ENCODE measurements at regions of chr2 and their contacts with region 1.

Region 1: GRCh38 chr2:219530048-219530963 is 13.3 kb downstream of the CHPF start:
- DNase-seq: peak; percentile 74 to 76
- ATAC-seq: peak; percentile 91 to 96
- H3K4me3 ChIP-seq: peak overlapping the region in 1 of 4 donors; percentile 40
- H3K27ac ChIP-seq: no peak overlapping the region
- H3K4me1 ChIP-seq: no peaks in the 10 kb centered on the region
- H3K27me3 ChIP-seq: peaks cover 0 to 2% (median 0%) of the 10 kb centered on the region in 3 donors
- CTCF ChIP-seq: peak; percentile 97 to 99 (median 98)
- POLR2A ChIP-seq: no peak

Region 2: DNA sequence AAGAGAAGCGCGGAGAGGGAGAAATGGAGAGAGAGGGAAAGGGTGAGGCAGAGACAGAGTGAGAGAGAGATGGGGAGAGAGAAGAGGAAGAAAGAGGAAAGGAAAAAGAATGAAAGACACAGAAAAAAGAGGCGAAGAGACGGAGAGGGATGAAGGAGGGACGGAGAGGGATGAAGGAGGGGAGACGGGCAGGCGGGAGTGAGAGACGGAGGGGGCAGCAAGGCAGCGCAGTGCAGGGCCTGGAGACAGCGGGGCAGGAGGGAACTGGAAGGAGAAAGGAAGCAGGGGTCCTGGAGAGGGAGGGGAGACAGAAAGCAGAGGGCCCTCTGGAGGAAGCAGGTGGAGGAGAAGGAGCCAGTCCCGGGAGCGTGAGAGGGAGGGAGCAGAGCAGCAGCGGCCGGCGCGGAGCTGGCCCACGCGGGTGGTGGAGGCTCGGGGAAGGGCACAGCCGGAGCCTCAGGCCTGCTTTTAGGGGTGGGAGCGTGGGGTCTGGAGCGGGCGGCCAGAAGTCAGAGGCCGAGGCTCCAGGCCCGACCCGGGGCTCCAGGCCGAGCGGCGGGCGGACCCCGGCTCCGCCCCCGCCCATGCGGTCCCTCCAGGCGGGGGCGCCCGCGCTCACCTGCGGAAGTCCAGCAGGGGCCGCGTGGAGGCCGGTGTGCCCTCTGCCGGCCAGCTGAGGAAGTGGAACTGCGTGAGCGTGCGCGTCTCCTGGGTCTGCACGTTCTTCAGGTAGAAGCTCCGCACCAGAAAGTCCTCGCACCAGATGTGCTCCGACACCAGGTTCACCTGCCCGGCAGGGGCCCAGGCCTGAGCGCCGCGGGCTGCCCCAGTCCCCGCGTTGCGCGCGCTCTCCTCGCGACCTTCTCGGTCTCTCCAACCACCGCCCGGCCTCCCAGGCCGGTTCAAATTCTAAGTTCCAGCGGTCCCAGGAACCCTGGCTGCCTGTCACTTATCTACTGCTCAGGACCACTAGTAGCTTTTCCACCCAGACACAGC is 235.7 kb before region 1 on chr2:
- in situ Hi-C with region 1: loop called in 1 of 4 experiments (anchors 25 kb)
- intact Hi-C with region 1: loop called (anchors 10 kb)
- DNase-seq: peak; percentile 64 to 80
- ATAC-seq: peak; percentile 85 to 86
- H3K4me3 ChIP-seq: peak overlapping the region; percentile 57 to 63 (median 58)
- H3K27ac ChIP-seq: peak overlapping the region; percentile 68 to 82 (median 77)
- H3K4me1 ChIP-seq: peaks cover 8 to 10% of the 10 kb centered on the region in 2 donors
- H3K27me3 ChIP-seq: no peaks in the 10 kb centered on the region
- CTCF ChIP-seq: peak; percentile 95 to 99 (median 98)
- POLR2A ChIP-seq: peak in 1 of 2 donors; percentile 30

Region 3: DNA sequence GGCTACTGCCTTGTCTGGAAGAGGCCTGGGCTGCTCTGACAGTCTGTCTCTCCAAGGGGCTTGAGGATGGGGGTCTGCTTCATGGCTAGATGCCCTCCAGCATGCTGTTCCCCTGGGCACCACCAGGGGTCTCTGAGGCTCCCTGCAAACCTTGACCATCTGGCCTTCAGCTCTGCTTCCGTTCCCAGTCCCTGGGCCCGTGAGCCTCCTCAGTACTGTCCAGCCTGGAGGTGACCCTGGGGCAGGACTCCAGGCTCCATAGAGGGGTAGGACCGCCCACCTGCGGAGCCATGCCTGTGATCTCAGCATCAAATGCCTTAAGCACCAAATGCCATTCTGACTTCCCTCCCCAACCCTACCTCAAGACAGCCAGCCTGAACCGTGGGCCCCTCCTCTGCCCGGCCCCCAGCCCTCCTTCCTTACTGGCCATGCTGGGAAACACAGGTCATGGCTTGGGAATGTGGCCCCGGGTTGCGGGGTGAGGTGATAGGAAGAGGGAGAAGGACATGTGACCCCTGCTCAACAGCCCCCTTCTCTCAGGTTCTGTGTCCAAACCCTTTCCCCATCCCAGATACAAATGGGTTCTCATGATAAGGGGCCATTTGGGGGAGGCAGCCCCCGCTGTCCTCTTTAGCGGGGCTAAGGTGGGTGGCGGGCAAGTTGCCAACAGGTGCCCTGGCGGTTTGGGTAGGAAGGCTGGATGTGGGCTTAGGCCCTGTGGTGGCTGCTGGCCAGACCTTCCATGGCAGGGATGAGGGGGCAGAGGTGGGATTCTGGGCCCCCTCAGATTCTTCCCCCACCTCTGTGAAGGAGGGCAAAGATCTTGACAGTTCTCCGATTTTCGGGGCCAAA is 70.6 kb before region 1 on chr2:
- in situ Hi-C with region 1: no loop called
- intact Hi-C with region 1: loop called (anchors 5 kb)
- DNase-seq: peak; percentile 59 to 89
- ATAC-seq: peak; percentile 67 to 71
- H3K4me3 ChIP-seq: peak overlapping the region in 2 of 4 donors; percentile 32 to 43
- H3K27ac ChIP-seq: peak overlapping the region; percentile 95 to 99 (median 97)
- H3K4me1 ChIP-seq: peaks cover 47 to 49% of the 10 kb centered on the region in 2 donors
- H3K27me3 ChIP-seq: no peaks in the 10 kb centered on the region
- CTCF ChIP-seq: peak; percentile 87 to 96 (median 90)
- POLR2A ChIP-seq: no peak

Region 4: GRCh38 chr2:219490186-219490585 is 40.1 kb before region 1 on chr2:
- in situ Hi-C with region 1: loop called in 1 of 4 experiments (anchors 5 kb)
- intact Hi-C with region 1: loop called (anchors 1 kb)
- DNase-seq: no peak
- ATAC-seq: no peak
- H3K4me3 ChIP-seq: no peak overlapping the region
- H3K27ac ChIP-seq: peak overlapping the region in 3 of 4 donors; percentile 33 to 78 (median 60)
- H3K4me1 ChIP-seq: peaks cover 4 to 12% of the 10 kb centered on the region in 2 donors
- H3K27me3 ChIP-seq: no peaks in the 10 kb centered on the region
- CTCF ChIP-seq: peak in 1 of 5 experiments; percentile 36
- POLR2A ChIP-seq: no peak

Region 5: DNA sequence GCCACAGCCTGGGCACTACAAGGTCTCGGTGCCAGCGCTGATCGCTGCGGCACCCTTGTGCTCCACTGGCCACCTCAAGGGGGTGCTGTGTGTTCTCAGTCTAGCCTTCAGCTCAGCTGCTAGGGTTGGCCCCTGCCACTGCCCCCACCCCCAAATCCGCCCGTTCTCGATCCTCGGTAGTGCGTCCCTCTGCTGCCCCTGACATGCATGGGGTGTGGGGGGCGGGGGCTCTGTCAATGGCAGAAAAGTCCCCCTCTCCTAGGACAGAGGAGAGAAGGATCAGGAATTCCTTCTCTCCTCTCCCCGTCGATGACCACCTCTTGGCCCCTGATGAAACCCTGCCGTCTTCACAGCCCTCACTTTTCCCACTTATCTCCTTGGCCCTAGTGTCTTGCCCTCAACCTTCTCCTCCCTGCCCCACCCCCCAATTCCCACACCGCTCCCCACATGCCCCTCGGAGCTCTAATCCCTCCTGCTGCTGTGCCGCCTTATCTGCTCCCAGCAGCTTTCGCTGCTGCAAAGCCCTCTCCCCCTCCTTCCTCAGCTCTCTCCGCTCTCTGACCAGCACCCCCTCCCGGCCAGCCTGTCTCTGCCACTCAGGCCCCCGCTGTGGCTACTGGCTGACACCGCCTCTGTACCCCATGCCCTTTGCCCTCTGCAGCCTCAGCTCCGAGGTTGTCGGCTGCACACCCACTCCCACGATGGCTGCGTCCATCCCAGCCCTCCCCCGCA is 20.4 kb before region 1 on chr2:
- in situ Hi-C with region 1: no loop called
- intact Hi-C with region 1: loop called (anchors 1 kb)
- DNase-seq: no peak
- ATAC-seq: peak; percentile 51 to 77
- H3K4me3 ChIP-seq: peak overlapping the region; percentile 4 to 47 (median 26)
- H3K27ac ChIP-seq: no peak overlapping the region
- H3K4me1 ChIP-seq: peaks cover 7 to 16% of the 10 kb centered on the region in 2 donors
- H3K27me3 ChIP-seq: peaks cover 23 to 35% (median 34%) of the 10 kb centered on the region in 3 donors
- CTCF ChIP-seq: peak in 4 of 5 experiments; percentile 43 to 74 (median 55)
- POLR2A ChIP-seq: no peak